Activated naive CD8-positive, alpha-beta T cell treated with anti-CD3 and anti-CD28 coated beads, Interleukin-2, amount 10 ng/mL, durations not matched to agents 7 days and 5 days (primary cell): ENCODE measurements at regions of chr9 and their contacts with region 1.

Region 1: DNA sequence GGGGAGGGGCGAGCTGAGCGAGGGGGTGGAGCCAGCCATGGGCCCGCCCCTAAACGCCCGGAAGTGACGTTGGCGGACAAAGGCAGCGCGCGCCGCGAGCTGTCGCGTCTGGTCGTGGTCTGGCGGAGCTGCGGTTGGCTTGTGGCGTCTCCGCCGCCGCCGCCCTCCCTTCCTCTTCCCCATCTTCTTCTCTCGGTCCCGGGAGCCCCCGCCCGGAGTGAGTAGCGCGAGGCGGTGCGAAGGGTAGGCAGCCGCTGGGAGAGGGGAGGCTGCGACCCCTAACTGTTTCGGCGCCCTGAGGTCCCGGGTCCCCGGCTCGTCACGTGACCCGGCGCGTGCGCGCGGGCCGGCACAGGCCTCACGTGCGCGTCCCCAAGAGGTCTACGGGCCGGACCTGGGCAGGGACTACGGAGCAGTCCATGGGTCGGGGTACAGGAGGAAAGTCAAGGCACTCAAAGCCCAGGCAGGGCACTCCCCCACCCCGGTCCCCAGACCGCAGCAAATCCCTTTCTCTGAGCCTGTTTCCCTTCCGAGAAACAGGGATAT is at the start of gene NTMT1:
- DNase-seq: peak; percentile 95
- ATAC-seq: peak; percentile 65
- H3K4me3 Mint-ChIP-seq: peak within 1 kb of the TSS; percentile 86
- H3K27ac Mint-ChIP-seq: peak within 1 kb of the TSS; percentile 89
- H3K4me1 Mint-ChIP-seq: peaks cover 33% of the 10 kb centered on the region
- H3K27me3 Mint-ChIP-seq: peaks cover 13% of the 10 kb centered on the region
- total RNA-seq, gene NTMT1: 30.1 to 34.9 TPM

Region 2: DNA sequence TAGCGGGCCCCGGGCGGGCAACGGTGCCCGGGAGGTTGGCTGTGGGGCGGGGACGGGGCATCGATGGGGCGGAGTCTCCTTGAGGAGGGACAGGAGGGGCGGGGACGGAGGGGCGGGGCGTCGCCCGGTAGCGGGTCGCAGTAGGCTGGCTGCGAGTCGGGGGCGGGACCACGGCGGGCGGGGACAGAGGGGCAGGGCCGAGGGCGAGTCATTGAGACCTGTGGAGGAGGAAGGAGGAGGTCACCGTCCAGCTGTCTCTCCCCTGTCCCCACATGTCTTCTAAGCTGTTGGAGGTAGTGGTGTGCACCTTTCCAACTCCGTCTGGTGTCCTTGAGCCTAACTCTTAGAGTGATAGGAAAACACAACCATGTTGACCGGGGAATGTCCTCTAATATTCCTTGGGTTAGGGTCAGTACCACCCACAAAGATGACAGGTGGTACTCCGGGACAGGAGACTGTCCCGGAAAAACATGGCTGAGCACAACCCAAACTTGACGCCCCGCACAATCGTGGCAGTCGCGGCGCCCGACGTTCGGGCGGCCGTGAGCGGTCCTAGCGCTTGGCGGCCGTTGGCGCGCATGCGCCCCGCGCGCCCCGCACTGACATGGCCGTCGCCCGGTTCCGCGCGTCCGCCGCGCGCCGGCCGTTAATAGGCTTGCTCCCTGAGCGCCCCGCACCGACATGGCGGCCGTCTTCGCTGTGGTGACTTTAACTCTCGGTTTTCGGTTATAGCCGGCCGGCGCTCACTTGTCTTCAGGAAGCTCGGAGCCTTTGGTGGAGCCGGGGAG is 515.2 kb before region 1 on chr9 and contains the starts of genes CRAT and PTPA:
- POLR2A ChIA-PET with region 1: interaction called, 13 read pairs
- DNase-seq: peak; percentile 95
- ATAC-seq: peak; percentile 90
- H3K4me3 Mint-ChIP-seq: peak within 1 kb of the TSS; percentile 96
- H3K27ac Mint-ChIP-seq: peak within 1 kb of the TSS; percentile 96
- H3K4me1 Mint-ChIP-seq: peaks cover 29% of the 10 kb centered on the region
- H3K27me3 Mint-ChIP-seq: no peaks in the 10 kb centered on the region
- total RNA-seq, gene CRAT: 19.5 to 22.7 TPM
- total RNA-seq, gene PTPA: 88.3 to 91.0 TPM

Region 3: GRCh38 chr9:129131300-129132145 is 494.6 kb before region 1 on chr9:
- POLR2A ChIA-PET with region 1: interaction called, 15 read pairs
- DNase-seq: peak; percentile 87
- ATAC-seq: peak; percentile 96
- H3K4me3 Mint-ChIP-seq: no peak overlapping the region
- H3K27ac Mint-ChIP-seq: no peak overlapping the region
- H3K4me1 Mint-ChIP-seq: peaks cover 4% of the 10 kb centered on the region
- H3K27me3 Mint-ChIP-seq: no peaks in the 10 kb centered on the region

Region 4: GRCh38 chr9:129139993-129140396 is 486.2 kb before region 1 on chr9:
- POLR2A ChIA-PET with region 1: interaction called, 27 read pairs
- DNase-seq: peak; percentile 66
- ATAC-seq: peak; percentile 86
- H3K4me3 Mint-ChIP-seq: peak overlapping the region; percentile 87
- H3K27ac Mint-ChIP-seq: peak overlapping the region; percentile 98
- H3K4me1 Mint-ChIP-seq: peaks cover 28% of the 10 kb centered on the region
- H3K27me3 Mint-ChIP-seq: no peaks in the 10 kb centered on the region

Region 5: GRCh38 chr9:129473523-129474229 is 152.5 kb before region 1 on chr9:
- POLR2A ChIA-PET with region 1: no interaction called
- DNase-seq: no peak
- ATAC-seq: no peak
- H3K4me3 Mint-ChIP-seq: no peak overlapping the region
- H3K27ac Mint-ChIP-seq: no peak overlapping the region
- H3K4me1 Mint-ChIP-seq: peaks cover 10% of the 10 kb centered on the region
- H3K27me3 Mint-ChIP-seq: no peaks in the 10 kb centered on the region

Region 6: GRCh38 chr9:129597355-129598088 is 28.6 kb before region 1 on chr9:
- POLR2A ChIA-PET with region 1: interaction called, 11 read pairs
- DNase-seq: peak; percentile 68
- ATAC-seq: peak; percentile 67
- H3K4me3 Mint-ChIP-seq: peak overlapping the region; percentile 67
- H3K27ac Mint-ChIP-seq: peak overlapping the region; percentile 80
- H3K4me1 Mint-ChIP-seq: peaks cover 32% of the 10 kb centered on the region
- H3K27me3 Mint-ChIP-seq: peaks cover 10% of the 10 kb centered on the region

Region 7: DNA sequence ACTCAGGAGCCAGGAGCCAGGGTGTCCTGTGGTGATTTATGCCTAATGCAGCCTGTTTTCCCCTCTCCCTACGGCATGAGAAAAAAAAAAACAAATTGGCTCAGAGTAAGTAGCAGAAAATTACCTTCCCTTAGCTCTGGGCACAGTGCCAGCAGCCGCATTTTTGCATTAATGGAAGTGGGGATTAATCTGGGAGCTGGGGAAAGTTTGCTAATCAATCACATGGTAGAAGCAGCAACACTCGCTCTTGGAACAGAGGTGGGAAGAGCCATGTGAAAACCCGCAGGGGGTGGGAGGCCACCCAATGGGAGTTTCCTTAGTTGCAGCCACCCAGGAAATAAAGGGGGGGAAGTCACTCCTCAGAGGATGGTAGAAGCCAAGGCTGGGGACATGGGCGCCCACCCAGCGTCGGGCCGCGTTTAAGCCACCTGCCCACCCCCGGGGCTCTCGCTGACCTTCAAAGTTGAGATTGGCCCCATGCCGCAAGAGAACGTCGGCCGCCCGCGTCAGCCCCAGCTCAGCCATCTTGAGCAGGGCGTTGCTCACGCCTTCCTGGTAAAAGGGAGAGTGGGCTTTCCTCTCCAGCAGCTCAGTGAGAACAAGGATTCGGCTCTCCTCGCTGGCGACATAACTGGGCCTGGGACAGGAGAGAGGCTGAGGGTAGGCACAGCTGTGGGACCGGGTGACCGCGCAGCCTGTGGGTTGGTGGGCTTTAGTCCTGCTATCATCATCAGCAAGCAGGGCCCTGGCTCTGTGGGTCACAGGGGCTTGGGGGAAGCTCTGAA is 14.1 kb after region 1 on chr9:
- POLR2A ChIA-PET with region 1: interaction called, 17 read pairs
- DNase-seq: no peak
- ATAC-seq: no peak
- H3K4me3 Mint-ChIP-seq: peak overlapping the region; percentile 87
- H3K27ac Mint-ChIP-seq: peak overlapping the region; percentile 30
- H3K4me1 Mint-ChIP-seq: peaks cover 12% of the 10 kb centered on the region
- H3K27me3 Mint-ChIP-seq: no peaks in the 10 kb centered on the region

Region 8: GRCh38 chr9:129650680-129651235 is 24.6 kb after region 1 on chr9:
- POLR2A ChIA-PET with region 1: no interaction called
- DNase-seq: no peak
- ATAC-seq: no peak
- H3K4me3 Mint-ChIP-seq: no peak overlapping the region
- H3K27ac Mint-ChIP-seq: no peak overlapping the region
- H3K4me1 Mint-ChIP-seq: peaks cover 3% of the 10 kb centered on the region
- H3K27me3 Mint-ChIP-seq: peaks cover 7% of the 10 kb centered on the region